Activated T-helper 2 cell treated with anti-CD3 and anti-CD28 coated beads, Interferon-gamma antibody, Interleukin-2, Interleukin-4, amounts not matched to agents 10 μg/mL and 5 μg/mL and 100 μg/mL, durations not matched to agents 14 hours and 24 hours and 36 hours (primary cell): ENCODE measurements at regions of chr19 and their contacts with region 1.

Region 1: DNA sequence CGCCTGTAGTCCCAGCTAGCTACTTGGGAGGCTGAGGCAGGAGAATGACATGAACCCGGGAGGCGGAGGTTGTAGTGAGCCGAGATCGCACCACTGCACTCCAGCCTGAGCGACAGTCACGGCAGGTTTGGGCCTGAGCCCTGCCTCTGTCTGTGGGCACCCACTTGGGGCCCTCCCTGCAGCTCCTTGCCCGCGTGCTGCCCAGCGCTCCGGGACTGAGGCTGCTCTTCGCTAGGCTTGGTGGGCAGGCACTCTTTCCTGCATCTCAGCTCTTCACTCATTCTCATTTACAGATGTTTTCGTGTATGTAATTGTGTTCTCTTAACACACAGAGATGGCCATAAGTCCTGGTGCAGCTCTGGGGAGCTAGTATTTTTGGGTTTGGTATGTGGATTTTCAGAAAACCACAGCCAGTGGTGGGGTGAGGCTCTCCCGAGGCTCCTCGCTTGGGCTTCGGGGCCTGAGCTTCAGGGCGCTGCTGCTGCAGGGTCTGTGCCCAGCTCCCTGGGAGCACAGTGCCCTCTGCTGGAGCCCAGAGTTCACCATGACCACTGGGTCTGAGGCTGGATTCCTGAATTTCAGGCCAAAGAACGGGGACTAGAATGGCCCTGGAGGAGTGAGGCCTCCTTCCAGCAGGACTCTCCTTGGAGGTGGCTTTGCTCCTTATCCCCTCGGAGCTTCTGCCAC is 15.2 kb downstream of the UPF1 start:
- DNase-seq: peak; percentile 40
- H3K4me3 Mint-ChIP-seq: no peak overlapping the region
- H3K27ac Mint-ChIP-seq: peak overlapping the region; percentile 74
- H3K4me1 Mint-ChIP-seq: peaks cover 54% of the 10 kb centered on the region
- H3K27me3 Mint-ChIP-seq: no peaks in the 10 kb centered on the region

Region 2: DNA sequence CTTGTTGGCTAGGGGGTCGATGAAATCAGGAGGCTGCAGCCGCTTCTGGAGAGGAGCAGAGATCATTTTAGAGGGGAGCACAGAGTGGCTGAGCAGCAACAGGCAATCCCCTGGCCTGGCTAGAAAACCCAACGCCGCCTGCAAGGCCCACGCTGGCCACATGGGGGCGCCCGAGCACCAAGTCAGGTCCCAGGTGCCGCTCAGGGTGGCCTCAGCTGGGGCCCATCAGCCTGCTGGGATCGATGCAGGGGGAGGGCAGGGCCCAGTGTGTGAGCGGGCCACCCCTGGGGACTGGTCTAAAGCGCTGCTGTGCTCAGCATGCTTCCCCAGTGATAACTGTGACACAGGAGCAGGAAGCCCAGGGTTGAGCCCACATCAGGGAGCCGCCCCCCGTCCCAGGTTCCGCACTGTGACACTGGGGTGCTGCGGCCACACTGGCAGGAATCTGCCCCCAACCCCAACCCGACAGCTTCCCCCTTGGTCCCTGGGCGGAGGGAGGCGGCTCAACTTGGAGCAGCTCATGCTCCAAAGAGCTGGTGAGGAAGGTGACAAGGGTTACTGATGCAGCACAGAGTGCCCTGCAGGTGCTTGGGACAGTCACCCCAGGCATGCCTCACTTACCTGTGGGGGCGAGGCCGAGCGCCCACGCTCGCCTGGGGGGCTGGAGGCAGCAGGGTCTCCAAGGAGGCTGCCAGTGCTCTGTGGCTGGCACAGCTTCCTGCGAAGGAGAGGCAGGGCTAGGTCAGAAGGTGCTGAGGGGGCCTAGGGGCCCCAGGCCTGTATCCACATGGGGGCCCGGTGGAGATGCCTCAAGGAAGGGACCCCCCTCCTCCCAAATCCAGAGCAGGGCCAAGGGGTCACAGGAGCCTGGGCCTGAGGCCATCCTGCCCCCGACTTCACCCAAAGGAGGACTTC is 395.8 kb before region 1 on chr19:
- intact Hi-C with region 1: loop called (anchors 10 kb)
- DNase-seq: peak; percentile 80
- H3K4me3 Mint-ChIP-seq: no peak overlapping the region
- H3K27ac Mint-ChIP-seq: no peak overlapping the region
- H3K4me1 Mint-ChIP-seq: no peaks in the 10 kb centered on the region
- H3K27me3 Mint-ChIP-seq: no peaks in the 10 kb centered on the region

Region 3: DNA sequence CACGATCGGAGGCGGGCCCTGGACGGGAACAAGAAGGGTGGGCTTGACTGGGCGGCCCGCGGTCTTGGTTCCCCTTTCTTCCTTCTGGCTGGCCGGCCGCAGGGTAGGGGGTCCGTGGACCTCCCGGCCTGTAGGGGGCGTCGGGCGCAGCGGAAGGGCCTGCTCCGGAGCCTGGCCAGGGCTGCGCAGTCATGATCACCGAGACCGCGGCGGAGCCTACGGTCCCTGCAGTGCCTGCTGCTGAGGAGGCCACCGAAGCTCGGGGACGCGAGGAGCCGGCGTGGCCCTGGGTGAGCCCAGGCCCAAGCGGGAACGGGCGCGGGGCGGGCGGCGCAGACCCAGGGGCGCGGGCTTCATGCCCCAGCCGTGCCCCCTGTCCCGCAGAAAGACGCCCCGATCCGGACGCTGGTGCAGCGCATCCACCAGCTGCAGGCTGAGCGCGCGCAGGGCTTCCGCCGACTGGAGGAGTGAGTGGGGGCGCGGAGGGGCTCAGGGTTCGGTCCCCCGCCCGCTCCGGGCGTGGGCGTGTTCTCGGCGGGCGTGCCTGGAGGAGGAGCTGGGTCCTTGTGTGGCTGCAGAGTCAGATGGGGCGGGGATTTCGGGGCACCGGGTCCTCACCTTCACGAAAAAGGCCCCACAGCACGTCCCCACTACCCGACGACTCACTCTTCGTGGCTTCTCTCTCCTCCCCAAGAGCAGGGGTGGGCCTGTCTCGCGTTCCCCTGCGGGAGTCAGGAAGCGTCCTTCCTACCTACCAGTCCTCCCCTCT is 258.2 kb before region 1 on chr19 and contains the start of gene REX1BD:
- intact Hi-C with region 1: loop called (anchors 5 kb)
- DNase-seq: peak; percentile 86
- H3K4me3 Mint-ChIP-seq: peak within 1 kb of the TSS; percentile 84
- H3K27ac Mint-ChIP-seq: peak within 1 kb of the TSS; percentile 93
- H3K4me1 Mint-ChIP-seq: peaks cover 31% of the 10 kb centered on the region
- H3K27me3 Mint-ChIP-seq: no peaks in the 10 kb centered on the region
- total RNA-seq, gene REX1BD: 122 and 132 TPM in 2 replicates

Region 4: GRCh38 chr19:18683213-18683939 is 163.6 kb before region 1 on chr19 and contains the start of gene CRTC1:
- intact Hi-C with region 1: loop called (anchors 10 kb)
- DNase-seq: peak; percentile 89
- H3K4me3 Mint-ChIP-seq: peak within 1 kb of the TSS; percentile 84
- H3K27ac Mint-ChIP-seq: peak within 1 kb of the TSS; percentile 83
- H3K4me1 Mint-ChIP-seq: peaks cover 5% of the 10 kb centered on the region
- H3K27me3 Mint-ChIP-seq: peaks cover 2% of the 10 kb centered on the region
- total RNA-seq, gene CRTC1: 6.4 and 7.0 TPM in 2 replicates

Region 5: GRCh38 chr19:18785179-18786128 is 61.6 kb before region 1 on chr19:
- intact Hi-C with region 1: loop called (anchors 5 kb)
- DNase-seq: peak; percentile 49
- H3K4me3 Mint-ChIP-seq: no peak overlapping the region
- H3K27ac Mint-ChIP-seq: no peak overlapping the region
- H3K4me1 Mint-ChIP-seq: peaks cover 17% of the 10 kb centered on the region
- H3K27me3 Mint-ChIP-seq: peaks cover 44% of the 10 kb centered on the region